Left cardiac atrium (tissue), 4 donors: ENCODE measurements at regions of chr7 and their contacts with region 1.

Region 1: GRCh38 chr7:22488643-22489462 is 11.1 kb downstream of the STEAP1B start:
- DNase-seq: peak; percentile 64
- ATAC-seq: peak; percentile 79 to 86

Region 2: GRCh38 chr7:22295402-22296264 is 193.2 kb before region 1 on chr7:
- intact Hi-C with region 1: loop called in 1 of 2 experiments (anchors 10 kb)
- DNase-seq: no peak
- ATAC-seq: peak in 1 of 2 donors; percentile 58

Region 3: GRCh38 chr7:22364900-22365299 is 124.0 kb before region 1 on chr7:
- intact Hi-C with region 1: no loop called
- DNase-seq: no peak
- ATAC-seq: no peak

Region 4: GRCh38 chr7:22452142-22452959 is 36.5 kb before region 1 on chr7:
- intact Hi-C with region 1: no loop called
- DNase-seq: peak; percentile 59
- ATAC-seq: peak; percentile 65 to 88